Activated CD4-positive, alpha-beta T cell treated with anti-CD3 and anti-CD28 coated beads for 36 hours (primary cell): ENCODE measurements at regions of chr3 and their contacts with region 1.

Region 1: DNA sequence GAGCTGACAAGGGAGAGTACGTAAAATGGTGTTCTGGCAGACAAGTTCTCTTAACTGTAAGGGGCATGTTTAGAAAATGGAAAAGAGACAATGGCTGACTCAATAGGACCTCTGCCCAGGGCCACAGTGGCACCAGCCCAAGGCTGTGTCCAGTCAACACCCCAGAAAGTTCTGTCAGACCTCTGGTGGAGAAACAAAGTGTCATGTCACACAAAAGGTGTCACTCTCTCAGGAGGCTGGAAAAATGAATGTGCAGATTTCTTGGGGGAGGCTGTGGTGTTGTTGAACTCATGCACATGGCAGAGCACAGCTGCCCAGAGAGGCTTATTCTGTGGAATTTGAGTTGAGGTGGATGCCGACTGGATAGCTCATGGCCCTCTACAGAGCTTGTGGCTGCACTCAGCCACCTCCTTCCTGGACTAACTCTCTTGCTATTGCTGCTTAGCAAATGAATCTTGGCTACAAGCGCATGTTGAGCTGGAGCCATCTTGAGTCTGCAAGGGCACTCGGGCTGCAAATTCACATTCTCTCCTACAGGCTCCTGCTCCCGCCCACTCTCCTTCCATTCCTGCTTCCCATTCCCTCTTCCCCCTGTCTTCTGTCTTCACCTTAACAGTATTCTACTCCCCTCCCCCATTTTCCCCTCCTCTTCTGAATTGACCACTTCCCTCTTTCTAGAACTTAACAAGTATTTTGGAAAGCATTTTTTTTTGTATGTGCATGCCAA is 55.8 kb upstream of the SLC7A14 start:
- DNase-seq: no peak
- ATAC-seq: no peak
- H3K4me3 Mint-ChIP-seq: no peak overlapping the region
- H3K27ac Mint-ChIP-seq: no peak overlapping the region
- H3K4me1 Mint-ChIP-seq: no peaks in the 10 kb centered on the region
- H3K27me3 Mint-ChIP-seq: peaks cover 7% of the 10 kb centered on the region

Region 2: DNA sequence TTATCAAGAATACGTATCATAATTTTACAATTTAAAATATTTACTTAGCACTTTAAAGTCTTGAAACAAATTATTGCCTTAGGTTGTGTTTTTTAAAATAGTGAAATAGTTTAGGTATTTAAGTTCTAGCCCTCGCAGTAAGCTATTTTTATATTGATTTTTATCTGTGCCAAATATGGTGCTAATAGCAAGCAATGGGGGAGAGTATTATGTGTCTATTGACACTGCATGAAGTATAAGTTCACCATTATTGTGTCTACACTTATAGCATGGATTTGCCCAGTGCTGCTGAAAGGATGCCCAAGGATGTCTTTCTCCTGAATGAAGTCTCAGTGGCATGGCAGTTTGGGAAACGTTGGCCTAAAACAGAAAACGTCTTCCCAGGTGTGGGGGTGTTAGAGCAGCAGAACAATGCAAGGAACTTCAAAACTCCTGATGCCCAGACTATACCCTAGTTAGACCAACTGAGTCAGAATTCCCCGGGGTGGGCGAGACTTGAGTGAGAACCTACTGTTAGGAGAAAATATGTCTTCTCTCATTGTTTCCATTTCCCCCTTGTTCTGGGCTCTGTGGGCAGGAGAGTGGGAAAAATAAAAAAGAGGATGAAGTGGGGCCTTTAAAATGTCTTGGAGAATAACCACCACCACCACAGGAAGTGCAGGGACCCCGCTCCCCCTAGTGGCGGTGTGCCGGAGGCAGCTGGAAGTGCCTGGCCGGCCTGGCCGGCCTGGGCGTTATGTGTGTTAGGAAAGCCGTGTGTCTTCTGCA is 48.4 kb after region 1 on chr3:
- CTCF ChIA-PET with region 1: no interaction called
- POLR2A ChIA-PET with region 1: no interaction called
- intact Hi-C with region 1: loop called in 1 of 2 experiments (anchors 1 kb)
- DNase-seq: peak; percentile 73
- ATAC-seq: peak; percentile 49
- H3K4me3 Mint-ChIP-seq: no peak overlapping the region
- H3K27ac Mint-ChIP-seq: no peak overlapping the region
- H3K4me1 Mint-ChIP-seq: peaks cover 4% of the 10 kb centered on the region
- H3K27me3 Mint-ChIP-seq: no peaks in the 10 kb centered on the region